ENCODE measurements at regions of chr1 and their contacts with region 1.

Region 1: DNA sequence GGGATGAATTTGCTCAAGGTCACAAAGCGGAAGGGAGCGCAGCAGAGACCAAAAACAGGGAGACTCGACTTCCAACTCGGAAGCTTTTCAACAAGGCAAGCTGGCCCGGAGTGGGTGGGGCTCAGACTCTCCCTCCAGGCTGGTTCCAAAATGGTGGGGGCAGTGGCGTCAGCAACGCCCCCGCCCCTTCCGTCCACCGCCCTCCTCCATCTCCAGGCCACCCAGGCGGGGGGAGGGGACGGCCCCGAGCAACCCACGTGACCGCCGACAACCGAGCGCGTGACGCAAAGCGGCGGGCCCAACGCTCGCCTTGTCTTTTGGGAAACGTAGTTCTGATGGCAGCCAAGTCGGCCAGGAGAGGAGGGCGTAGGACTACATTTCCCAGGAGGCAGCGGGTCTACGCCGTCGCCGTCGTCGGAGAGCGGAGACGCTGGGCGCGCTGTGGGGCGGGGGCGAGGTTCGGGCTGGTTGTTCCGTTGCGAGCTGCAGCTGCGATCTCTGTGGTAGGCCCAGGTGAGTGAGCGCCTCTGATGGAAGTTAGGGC is at the start of gene THRAP3:
- DNase-seq: peak; percentile 95 to 100 (median 100)
- ATAC-seq: peak; percentile 87
- H3K4me3 Mint-ChIP-seq: peak within 1 kb of the TSS; percentile 94 to 100 (median 98)
- H3K27ac Mint-ChIP-seq: peak within 1 kb of the TSS; percentile 97 to 100 (median 100)
- H3K4me1 Mint-ChIP-seq: peaks cover 20 to 48% (median 43%) of the 10 kb centered on the region in 4 donors
- H3K27me3 Mint-ChIP-seq: no peaks in the 10 kb centered on the region
- polyA plus RNA-seq, gene THRAP3: 87.6 to 106 (median 97.8) TPM

Region 2: GRCh38 chr1:35930593-35931445 is 293.2 kb before region 1 on chr1 and contains the start of gene AGO3:
- POLR2A ChIA-PET with region 1: interaction called, 14 read pairs
- DNase-seq: peak; percentile 80 to 91 (median 84)
- ATAC-seq: peak; percentile 82 to 83
- H3K4me3 Mint-ChIP-seq: peak within 1 kb of the TSS; percentile 86 to 97 (median 92)
- H3K27ac Mint-ChIP-seq: peak within 1 kb of the TSS; percentile 94 to 99 (median 98)
- H3K4me1 Mint-ChIP-seq: peaks cover 6 to 40% (median 33%) of the 10 kb centered on the region in 4 donors
- H3K27me3 Mint-ChIP-seq: no peaks in the 10 kb centered on the region
- polyA plus RNA-seq, gene AGO3: 5.7 to 16.8 (median 8.6) TPM

Region 3: GRCh38 chr1:36155408-36156328 is 68.4 kb before region 1 on chr1 and contains the start of gene MAP7D1:
- POLR2A ChIA-PET with region 1: interaction called, 52 read pairs
- DNase-seq: peak; percentile 75 to 98 (median 82)
- ATAC-seq: peak; percentile 68 to 79
- H3K4me3 Mint-ChIP-seq: peak within 1 kb of the TSS; percentile 85 to 95 (median 93)
- H3K27ac Mint-ChIP-seq: peak within 1 kb of the TSS; percentile 93 to 99 (median 95)
- H3K4me1 Mint-ChIP-seq: peaks cover 41 to 83% (median 75%) of the 10 kb centered on the region in 4 donors
- H3K27me3 Mint-ChIP-seq: no peaks in the 10 kb centered on the region
- polyA plus RNA-seq, gene MAP7D1: 13.3 to 67.1 (median 20.1) TPM

Region 4: DNA sequence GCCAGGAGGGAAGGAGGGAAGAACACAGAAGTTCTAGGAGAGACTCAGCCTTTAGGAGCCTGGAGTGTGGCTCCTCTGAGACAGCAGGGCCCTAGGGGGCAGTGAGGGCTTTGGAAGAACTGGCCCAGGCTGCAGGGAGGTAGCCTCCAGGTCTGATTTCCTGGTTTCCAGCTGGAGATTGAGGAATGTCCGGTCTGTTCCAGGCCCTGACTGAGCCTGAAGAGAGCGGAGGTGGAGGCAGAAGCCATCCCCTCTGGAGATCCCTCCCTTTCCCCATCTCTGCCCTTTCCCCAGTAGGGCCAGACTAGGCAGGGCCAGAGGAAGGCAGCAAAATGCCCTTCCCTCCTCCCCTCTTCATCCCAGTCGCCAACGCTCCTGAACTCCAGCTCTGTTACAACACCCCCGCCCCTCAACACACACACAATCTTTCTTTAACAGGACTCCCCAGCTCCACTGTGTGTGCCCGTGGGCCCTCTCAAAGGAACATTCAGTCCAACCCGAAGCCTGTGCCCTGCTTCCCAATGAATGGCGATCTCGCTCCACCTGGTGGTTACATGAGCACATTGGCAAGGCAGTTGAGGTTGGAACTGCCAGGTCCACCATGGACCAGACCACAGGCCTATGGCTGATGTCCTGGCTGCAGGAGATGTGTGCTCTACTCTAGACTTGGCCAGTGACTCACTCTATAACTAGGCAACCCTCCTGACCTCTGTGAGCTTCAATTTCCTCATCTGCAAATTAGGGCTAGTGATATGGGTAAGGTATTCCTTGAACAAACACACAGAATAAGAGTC is 36.1 kb before region 1 on chr1:
- POLR2A ChIA-PET with region 1: interaction called, 20 read pairs
- DNase-seq: peak; percentile 57 to 92 (median 80)
- ATAC-seq: peak; percentile 98 to 99
- H3K4me3 Mint-ChIP-seq: no peak overlapping the region
- H3K27ac Mint-ChIP-seq: peak overlapping the region; percentile 57 to 91 (median 74)
- H3K4me1 Mint-ChIP-seq: peaks cover 3 to 13% (median 8%) of the 10 kb centered on the region in 4 donors
- H3K27me3 Mint-ChIP-seq: no peaks in the 10 kb centered on the region

Region 5: GRCh38 chr1:36306902-36307456 is 82.9 kb after region 1 on chr1:
- POLR2A ChIA-PET with region 1: interaction called, 10 read pairs
- DNase-seq: peak; percentile 87 to 96 (median 94)
- ATAC-seq: peak; percentile 96 to 98
- H3K4me3 Mint-ChIP-seq: peak overlapping the region; percentile 94 to 98 (median 96)
- H3K27ac Mint-ChIP-seq: peak overlapping the region; percentile 58 to 98 (median 92)
- H3K4me1 Mint-ChIP-seq: peaks cover 4 to 18% (median 13%) of the 10 kb centered on the region in 4 donors
- H3K27me3 Mint-ChIP-seq: no peaks in the 10 kb centered on the region

Measured in naive thymus-derived CD8-positive, alpha-beta T cell (primary cell).